H1 (cell line): ENCODE measurements at regions of chr13 and their contacts with region 1.

Region 1: DNA sequence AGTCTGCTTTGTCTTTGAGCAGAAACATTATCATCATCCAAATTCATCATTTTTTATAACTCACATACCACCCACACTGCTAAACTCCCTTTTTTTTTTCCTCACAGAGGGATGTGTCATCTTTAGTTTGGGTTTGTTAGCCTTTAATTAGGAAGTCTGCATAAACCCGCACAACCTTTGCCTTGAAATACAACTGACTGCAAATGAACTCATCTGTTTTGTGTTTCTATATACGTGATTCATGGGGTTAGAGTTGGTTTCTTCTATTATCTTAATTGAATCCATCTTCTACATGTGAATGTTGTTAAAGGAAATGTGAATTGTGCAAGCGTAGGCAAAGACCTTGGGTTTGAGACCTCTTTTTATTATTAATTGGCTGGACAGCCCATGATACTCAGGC is 102.7 kb downstream of the SLAIN1 start:
- DNase-seq: no peak
- H3K4me3 ChIP-seq: no peak overlapping the region
- H3K27ac ChIP-seq: no peak overlapping the region
- H3K4me1 ChIP-seq: no peaks in the 10 kb centered on the region
- H3K27me3 ChIP-seq: no peaks in the 10 kb centered on the region
- CTCF ChIP-seq: no peak
- EP300 ChIP-seq: no peak
- POLR2A ChIP-seq: no peak
- RAD21 ChIP-seq: no peak

Region 2: DNA sequence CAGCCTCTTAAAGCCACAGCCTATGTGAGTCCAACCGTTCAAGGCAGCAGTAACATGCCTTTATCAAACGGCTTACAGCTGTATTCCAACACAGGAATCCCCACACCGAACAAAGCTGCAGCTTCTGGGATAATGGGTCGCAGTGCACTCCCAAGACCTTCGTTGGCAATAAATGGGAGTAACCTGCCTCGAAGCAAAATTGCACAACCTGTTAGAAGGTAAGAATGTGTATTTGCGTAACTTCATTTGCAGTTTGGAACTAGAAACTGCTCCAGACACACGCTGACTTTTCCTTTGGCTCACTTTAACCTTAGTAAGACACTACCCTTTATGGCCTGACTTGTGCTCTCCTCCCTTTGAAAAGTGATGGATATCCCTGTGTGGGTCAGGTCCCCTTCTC is 39.3 kb before region 1 on chr13:
- CTCF ChIA-PET with region 1: no interaction called
- POLR2A ChIA-PET with region 1: no interaction called
- DNase-seq: no peak
- H3K4me3 ChIP-seq: no peak overlapping the region
- H3K27ac ChIP-seq: no peak overlapping the region
- H3K4me1 ChIP-seq: no peaks in the 10 kb centered on the region
- H3K27me3 ChIP-seq: no peaks in the 10 kb centered on the region
- CTCF ChIP-seq: no peak
- EP300 ChIP-seq: no peak
- POLR2A ChIP-seq: no peak
- RAD21 ChIP-seq: no peak

Region 3: GRCh38 chr13:77810430-77810829 is 10.2 kb after region 1 on chr13:
- CTCF ChIA-PET with region 1: interaction called, 20 read pairs
- POLR2A ChIA-PET with region 1: no interaction called
- DNase-seq: no peak
- H3K4me3 ChIP-seq: no peak overlapping the region
- H3K27ac ChIP-seq: no peak overlapping the region
- H3K4me1 ChIP-seq: no peaks in the 10 kb centered on the region
- H3K27me3 ChIP-seq: no peaks in the 10 kb centered on the region
- CTCF ChIP-seq: peak in 1 of 3 experiments; percentile 52; a peak in 1 of 4 replicates
- EP300 ChIP-seq: no peak
- POLR2A ChIP-seq: no peak
- RAD21 ChIP-seq: peak; percentile 57 to 62